Breast epithelium (tissue), 4 donors: ENCODE measurements at regions of chr2 and their contacts with region 1.

Region 1: GRCh38 chr2:172596776-172597175 is 40.9 kb downstream of the PDK1 start:
- DNase-seq: no peak
- H3K4me3 ChIP-seq: no peak overlapping the region
- H3K27ac ChIP-seq: no peak overlapping the region
- H3K4me1 ChIP-seq: no peaks in the 10 kb centered on the region
- H3K27me3 ChIP-seq: no peaks in the 10 kb centered on the region
- CTCF ChIP-seq: no peak
- POLR2A ChIP-seq: no peak

Region 2: GRCh38 chr2:174014699-174015070 is 1417.9 kb after region 1 on chr2:
- intact Hi-C with region 1: no loop called
- DNase-seq: no peak
- H3K4me3 ChIP-seq: peak overlapping the region in 1 of 3 donors; percentile 9
- H3K27ac ChIP-seq: peak overlapping the region; percentile 98
- H3K4me1 ChIP-seq: peaks cover 0 to 4% of the 10 kb centered on the region in 2 donors
- H3K27me3 ChIP-seq: no peaks in the 10 kb centered on the region
- CTCF ChIP-seq: no peak
- POLR2A ChIP-seq: no peak

Region 3: GRCh38 chr2:174108579-174108978 is 1511.8 kb after region 1 on chr2:
- intact Hi-C with region 1: loop called (anchors 10 kb)
- DNase-seq: no peak
- H3K4me3 ChIP-seq: no peak overlapping the region
- H3K27ac ChIP-seq: no peak overlapping the region
- H3K4me1 ChIP-seq: no peaks in the 10 kb centered on the region
- H3K27me3 ChIP-seq: no peaks in the 10 kb centered on the region
- CTCF ChIP-seq: no peak
- POLR2A ChIP-seq: no peak